ENCODE measurements at regions of chr15 and their contacts with region 1.

Region 1: GRCh38 chr15:78909791-78910228 is 35.0 kb downstream of the CTSH start:
- DNase-seq: no peak
- H3K4me3 ChIP-seq: no peak overlapping the region
- H3K27ac ChIP-seq: peak overlapping the region; percentile 35 to 47
- H3K4me1 ChIP-seq: peaks cover 9 to 56% of the 10 kb centered on the region in 2 donors
- H3K27me3 ChIP-seq: no peaks in the 10 kb centered on the region
- CTCF ChIP-seq: peak; percentile 54 to 69 (median 67)

Region 2: GRCh38 chr15:78750566-78750965 is 159.2 kb before region 1 on chr15:
- intact Hi-C with region 1: loop called (anchors 10 kb)
- DNase-seq: peak in 1 of 2 donors; percentile 61
- H3K4me3 ChIP-seq: peak overlapping the region; percentile 16 to 56
- H3K27ac ChIP-seq: peak overlapping the region; percentile 5 to 69
- H3K4me1 ChIP-seq: peaks cover 0 to 3% of the 10 kb centered on the region in 2 donors
- H3K27me3 ChIP-seq: no peaks in the 10 kb centered on the region
- CTCF ChIP-seq: no peak

Region 3: DNA sequence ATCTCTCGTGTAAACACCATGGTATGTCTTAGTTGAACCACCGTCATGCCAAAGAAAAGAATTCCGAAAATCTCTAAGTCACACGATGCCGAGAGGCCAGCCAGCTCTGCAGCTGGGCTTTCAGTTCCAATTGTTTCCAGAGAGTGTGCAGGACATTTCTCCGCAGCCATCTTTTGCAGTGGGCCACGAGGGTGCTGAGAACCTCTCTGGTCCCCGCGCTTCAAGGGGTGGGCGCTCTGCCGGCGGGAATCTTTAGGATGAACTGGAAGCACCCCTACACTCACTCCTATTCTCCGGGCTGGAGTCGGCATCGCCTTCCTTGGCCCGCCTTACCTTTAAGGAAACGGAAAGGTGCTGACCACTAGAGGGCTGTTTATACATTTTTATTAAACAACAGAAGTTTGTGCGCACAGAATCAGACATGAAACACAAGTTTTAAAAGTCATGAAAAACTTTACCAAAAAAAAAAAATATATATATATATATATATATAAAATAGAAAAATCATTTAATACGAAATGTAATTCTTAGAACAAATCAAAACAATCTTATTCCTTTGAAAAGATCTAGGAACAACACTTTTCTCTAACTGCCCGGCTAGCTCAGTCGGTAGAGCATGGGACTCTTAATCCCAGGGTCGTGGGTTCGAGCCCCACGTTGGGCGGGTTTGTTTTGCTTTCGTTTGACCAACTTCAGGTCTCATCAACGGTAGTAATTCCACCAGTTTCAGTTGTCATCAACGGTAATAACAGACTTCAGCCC is 49.7 kb before region 1 on chr15:
- intact Hi-C with region 1: loop called (anchors 1 kb)
- DNase-seq: peak in 1 of 2 donors; percentile 87
- H3K4me3 ChIP-seq: peak overlapping the region; percentile 50 to 65
- H3K27ac ChIP-seq: peak overlapping the region; percentile 83
- H3K4me1 ChIP-seq: peaks cover 6 to 12% of the 10 kb centered on the region in 2 donors
- H3K27me3 ChIP-seq: no peaks in the 10 kb centered on the region
- CTCF ChIP-seq: peak; percentile 48 to 61 (median 52)

Region 4: GRCh38 chr15:78872972-78873792 is 36.6 kb before region 1 on chr15:
- intact Hi-C with region 1: loop called (anchors 1 kb)
- DNase-seq: peak in 1 of 2 donors; percentile 89
- H3K4me3 ChIP-seq: peak overlapping the region; percentile 98 to 99
- H3K27ac ChIP-seq: peak overlapping the region; percentile 100
- H3K4me1 ChIP-seq: peaks cover 5 to 16% of the 10 kb centered on the region in 2 donors
- H3K27me3 ChIP-seq: no peaks in the 10 kb centered on the region
- CTCF ChIP-seq: no peak

Region 5: GRCh38 chr15:78944669-78945407 is 35.0 kb after region 1 on chr15 and contains the start of gene CTSH:
- intact Hi-C with region 1: loop called (anchors 5 kb)
- DNase-seq: peak in 1 of 2 donors; percentile 77
- H3K4me3 ChIP-seq: peak within 1 kb of the TSS; percentile 49 to 67
- H3K27ac ChIP-seq: peak within 1 kb of the TSS in 1 of 2 donors; percentile 43
- H3K4me1 ChIP-seq: peaks cover 3 to 12% of the 10 kb centered on the region in 2 donors
- H3K27me3 ChIP-seq: no peaks in the 10 kb centered on the region
- CTCF ChIP-seq: no peak
- total RNA-seq, gene CTSH: 112 TPM

Region 6: GRCh38 chr15:78979456-78980320 is 69.9 kb after region 1 on chr15:
- intact Hi-C with region 1: loop called (anchors 2 kb)
- DNase-seq: peak in 1 of 2 donors; percentile 73
- H3K4me3 ChIP-seq: no peak overlapping the region
- H3K27ac ChIP-seq: no peak overlapping the region
- H3K4me1 ChIP-seq: no peaks in the 10 kb centered on the region
- H3K27me3 ChIP-seq: no peaks in the 10 kb centered on the region
- CTCF ChIP-seq: peak in 2 of 3 experiments; percentile 44 to 63

Region 7: GRCh38 chr15:79028411-79028964 is 118.7 kb after region 1 on chr15:
- intact Hi-C with region 1: no loop called
- DNase-seq: no peak
- H3K4me3 ChIP-seq: no peak overlapping the region
- H3K27ac ChIP-seq: no peak overlapping the region
- H3K4me1 ChIP-seq: no peaks in the 10 kb centered on the region
- H3K27me3 ChIP-seq: no peaks in the 10 kb centered on the region
- CTCF ChIP-seq: peak; percentile 43 to 59 (median 48)

Region 8: DNA sequence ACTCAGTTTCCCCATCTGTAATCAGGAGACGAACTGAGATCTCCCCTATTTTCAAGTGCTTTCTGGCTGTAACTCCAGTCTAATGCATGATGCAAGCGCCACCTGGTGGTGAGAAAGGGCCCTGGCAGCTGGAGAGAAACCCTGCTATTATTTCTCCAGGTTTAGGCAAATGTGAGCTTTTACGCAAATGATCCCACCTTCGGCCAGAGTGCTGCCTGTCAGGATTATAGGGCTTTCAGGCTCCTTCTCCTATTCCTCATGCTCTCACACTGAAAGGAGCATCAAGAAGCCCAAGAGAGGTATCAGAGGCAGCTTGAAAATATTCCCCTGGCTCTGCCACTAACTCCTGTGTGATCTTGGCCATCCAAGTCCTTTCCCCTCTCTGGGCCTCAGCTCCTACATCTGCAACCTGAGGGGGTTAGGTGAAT is 274.7 kb after region 1 on chr15:
- intact Hi-C with region 1: loop called (anchors 5 kb)
- DNase-seq: peak; percentile 17 to 78
- H3K4me3 ChIP-seq: no peak overlapping the region
- H3K27ac ChIP-seq: no peak overlapping the region
- H3K4me1 ChIP-seq: no peaks in the 10 kb centered on the region
- H3K27me3 ChIP-seq: no peaks in the 10 kb centered on the region
- CTCF ChIP-seq: peak; percentile 69 to 99 (median 88)

Region 9: GRCh38 chr15:79248183-79248582 is 338.4 kb after region 1 on chr15:
- intact Hi-C with region 1: no loop called
- DNase-seq: no peak
- H3K4me3 ChIP-seq: no peak overlapping the region
- H3K27ac ChIP-seq: no peak overlapping the region
- H3K4me1 ChIP-seq: no peaks in the 10 kb centered on the region
- H3K27me3 ChIP-seq: no peaks in the 10 kb centered on the region
- CTCF ChIP-seq: no peak